Activated CD4-positive, alpha-beta T cell treated with anti-CD3 and anti-CD28 coated beads for 36 hours (primary cell): ENCODE measurements at regions of chr2 and their contacts with region 1.

Region 1: DNA sequence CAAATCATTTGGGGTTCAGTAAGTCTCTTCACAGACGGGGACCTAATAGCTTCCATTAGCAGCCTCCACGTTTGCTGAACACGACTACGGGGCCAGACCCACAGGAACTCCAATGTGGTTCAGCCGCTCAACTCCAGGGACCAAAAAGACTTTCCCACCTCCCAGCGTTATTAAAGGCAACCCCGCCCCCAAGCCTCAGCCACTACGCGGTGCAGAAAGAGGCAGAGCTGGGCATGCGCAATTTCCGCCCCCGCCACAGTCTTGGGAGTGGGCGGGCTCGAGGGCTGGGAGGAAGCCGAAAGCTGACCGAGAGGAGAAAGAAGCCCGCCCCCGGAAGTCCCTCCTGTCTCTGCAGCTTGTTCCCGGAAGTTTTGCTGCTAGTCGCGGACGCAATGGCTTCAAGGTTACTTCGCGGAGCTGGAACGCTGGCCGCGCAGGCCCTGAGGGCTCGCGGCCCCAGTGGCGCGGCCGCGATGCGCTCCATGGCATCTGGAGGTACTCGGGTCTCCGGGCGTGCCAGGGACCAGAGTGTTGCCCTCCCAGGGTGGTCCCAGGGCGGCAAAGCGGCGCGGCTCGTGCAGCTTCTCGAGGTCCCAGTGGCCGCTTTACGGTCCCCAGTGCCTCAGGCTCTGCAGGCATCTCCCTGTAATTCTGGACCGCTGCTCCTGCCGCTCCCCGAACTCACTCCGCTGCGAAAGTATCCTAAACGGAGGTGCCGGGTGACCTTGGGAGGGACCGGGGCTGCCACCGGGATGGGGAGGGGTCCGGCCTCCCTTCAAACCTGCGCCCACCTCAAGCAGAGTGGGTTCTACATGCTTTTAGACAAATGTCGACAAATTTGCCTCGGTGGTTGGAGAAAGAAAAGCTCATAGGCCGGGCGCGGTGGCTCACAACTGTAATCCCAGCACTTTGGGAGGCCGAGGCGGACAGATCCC is at the start of gene COX5B:
- DNase-seq: peak; percentile 99
- ATAC-seq: peak; percentile 96
- H3K4me3 Mint-ChIP-seq: peak within 1 kb of the TSS; percentile 87
- H3K27ac Mint-ChIP-seq: peak within 1 kb of the TSS; percentile 98
- H3K4me1 Mint-ChIP-seq: peaks cover 14% of the 10 kb centered on the region
- H3K27me3 Mint-ChIP-seq: no peaks in the 10 kb centered on the region
- total RNA-seq, gene COX5B: 189 to 220 TPM

Region 2: DNA sequence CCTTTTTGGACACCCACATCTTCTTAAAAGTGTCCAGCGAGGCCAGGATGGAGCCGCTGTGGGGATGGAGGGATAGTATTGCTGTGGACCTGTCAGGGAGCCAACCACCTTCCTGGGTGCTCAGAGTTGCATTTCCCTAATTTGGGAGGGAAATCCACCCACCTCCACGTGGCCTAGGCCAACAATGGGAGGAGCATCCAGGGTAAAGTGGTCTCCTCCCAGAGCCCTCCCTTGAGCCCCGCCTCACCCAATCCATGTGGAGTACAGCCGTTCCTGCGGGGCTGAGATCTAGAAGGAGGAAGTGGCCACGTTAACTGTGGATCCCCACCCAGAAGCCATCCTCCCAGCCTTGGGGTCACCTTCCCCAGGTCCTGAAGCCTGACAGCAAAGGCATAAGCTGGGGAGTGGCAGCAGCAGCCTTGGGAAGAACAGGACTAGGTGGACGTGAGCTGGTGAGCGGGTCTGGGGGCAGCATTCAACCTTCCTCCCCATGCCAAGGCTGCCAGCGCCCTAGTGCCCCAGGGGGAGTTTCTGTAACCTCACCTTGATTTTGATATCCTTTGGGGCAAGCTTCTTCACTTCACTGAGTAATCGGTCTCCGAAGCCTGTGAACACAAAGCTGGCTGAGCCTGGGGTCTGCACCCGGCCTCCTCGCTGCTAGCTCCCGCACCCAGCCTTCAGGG is 11.1 kb after region 1 on chr2:
- CTCF ChIA-PET with region 1: interaction called, 27 read pairs
- POLR2A ChIA-PET with region 1: interaction called, 96 read pairs
- intact Hi-C with region 1: loop called in 1 of 2 experiments (anchors 1 kb)
- DNase-seq: no peak
- ATAC-seq: no peak
- H3K4me3 Mint-ChIP-seq: no peak overlapping the region
- H3K27ac Mint-ChIP-seq: no peak overlapping the region
- H3K4me1 Mint-ChIP-seq: peaks cover 29% of the 10 kb centered on the region
- H3K27me3 Mint-ChIP-seq: no peaks in the 10 kb centered on the region

Region 3: GRCh38 chr2:97688062-97688827 is 42.3 kb after region 1 on chr2:
- CTCF ChIA-PET with region 1: interaction called, 4 read pairs
- POLR2A ChIA-PET with region 1: interaction called, 5 read pairs
- intact Hi-C with region 1: loop called (anchors 2 to 5 kb)
- DNase-seq: no peak
- ATAC-seq: peak; percentile 96
- H3K4me3 Mint-ChIP-seq: no peak overlapping the region
- H3K27ac Mint-ChIP-seq: peak overlapping the region; percentile 73
- H3K4me1 Mint-ChIP-seq: peaks cover 10% of the 10 kb centered on the region
- H3K27me3 Mint-ChIP-seq: no peaks in the 10 kb centered on the region

Region 4: DNA sequence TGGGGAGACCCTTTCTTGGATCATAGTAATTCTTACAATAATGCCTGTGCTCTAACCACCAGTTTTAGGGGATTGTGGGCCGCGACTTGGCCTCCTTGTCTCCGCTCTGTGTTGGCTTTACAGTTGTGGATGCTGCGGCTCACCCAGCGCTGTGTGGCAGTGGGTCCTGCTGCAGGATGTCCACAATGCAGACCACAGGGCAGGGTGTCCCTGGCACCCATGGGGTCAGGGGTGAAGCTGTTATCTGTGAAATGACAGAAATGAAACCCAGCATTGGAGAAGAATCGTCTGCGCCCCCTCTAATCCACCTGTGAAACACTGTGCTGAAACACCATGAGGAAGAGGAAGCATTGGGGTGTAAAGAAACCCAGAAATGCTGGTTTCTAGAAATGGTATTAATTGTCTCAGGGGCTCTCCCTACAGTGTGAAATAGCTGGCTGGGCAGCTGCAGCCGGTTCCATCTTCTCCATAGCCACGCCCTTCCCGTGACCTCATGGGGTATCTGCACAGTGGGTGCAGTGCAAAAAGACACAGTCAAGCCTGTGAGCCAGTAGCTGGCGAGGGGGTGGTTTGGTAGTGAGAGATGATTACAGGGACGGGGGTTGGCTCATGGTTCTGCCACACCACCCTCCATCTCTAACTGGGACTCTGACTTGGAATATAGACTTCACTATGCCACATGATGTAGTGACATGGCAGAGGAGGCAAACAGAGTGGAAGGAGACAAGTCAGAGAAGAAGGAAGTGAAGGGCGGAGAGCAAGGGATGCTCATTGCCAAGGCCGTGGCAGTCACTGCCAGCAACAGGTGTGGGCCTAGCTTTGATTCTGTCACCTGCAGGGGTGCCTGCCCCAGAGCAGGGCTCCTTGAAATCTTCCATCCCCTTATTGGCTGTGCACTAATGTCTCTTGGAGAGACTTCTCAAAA is 814.9 kb after region 1 on chr2:
- CTCF ChIA-PET with region 1: no interaction called
- POLR2A ChIA-PET with region 1: no interaction called
- intact Hi-C with region 1: no loop called
- DNase-seq: peak; percentile 94
- ATAC-seq: peak; percentile 70
- H3K4me3 Mint-ChIP-seq: peak overlapping the region; percentile 28
- H3K27ac Mint-ChIP-seq: peak overlapping the region; percentile 99
- H3K4me1 Mint-ChIP-seq: peaks cover 89% of the 10 kb centered on the region
- H3K27me3 Mint-ChIP-seq: no peaks in the 10 kb centered on the region